ENCODE measurements at regions of chr5 and their contacts with region 1.

Region 1: GRCh38 chr5:1523771-1524480 is at the start of gene LPCAT1:
- DNase-seq: peak; percentile 90 to 95
- ATAC-seq: peak; percentile 92
- H3K4me3 ChIP-seq: peak within 1 kb of the TSS; percentile 97 to 100
- H3K27ac ChIP-seq: peak within 1 kb of the TSS; percentile 7 to 9
- H3K4me1 ChIP-seq: no peaks in the 10 kb centered on the region
- H3K27me3 ChIP-seq: no peaks in the 10 kb centered on the region
- total RNA-seq, gene LPCAT1: 38.7 to 68.7 TPM

Region 2: DNA sequence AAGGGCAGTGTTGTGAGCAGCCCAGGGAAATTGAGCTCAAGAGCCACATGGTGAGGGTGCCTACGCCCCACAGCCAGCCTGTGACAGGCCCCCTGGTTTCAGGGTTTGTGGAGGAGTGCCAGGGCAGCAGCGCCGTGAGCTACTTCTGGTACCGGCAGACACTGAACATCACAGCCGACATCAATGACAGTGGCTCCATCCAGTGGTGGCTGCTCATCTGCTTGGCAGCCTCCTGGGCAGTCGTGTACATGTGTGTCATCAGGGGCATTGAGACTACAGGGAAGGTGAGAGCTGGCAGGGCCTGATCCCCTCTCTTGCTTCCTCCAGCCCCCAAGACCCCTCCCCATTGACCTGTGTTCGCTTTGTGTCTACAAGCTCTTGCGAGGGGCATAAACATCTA is 288.5 kb before region 1 on chr5:
- intact Hi-C with region 1: no loop called
- DNase-seq: no peak
- ATAC-seq: no peak
- H3K4me3 ChIP-seq: no peak overlapping the region
- H3K27ac ChIP-seq: no peak overlapping the region
- H3K4me1 ChIP-seq: no peaks in the 10 kb centered on the region
- H3K27me3 ChIP-seq: no peaks in the 10 kb centered on the region

Region 3: GRCh38 chr5:1594357-1595106 is 70.6 kb after region 1 on chr5:
- intact Hi-C with region 1: loop called in 1 of 2 experiments (anchors 5 kb)
- DNase-seq: peak; percentile 79 to 87
- ATAC-seq: peak; percentile 89
- H3K4me3 ChIP-seq: peak overlapping the region; percentile 44 to 60
- H3K27ac ChIP-seq: peak overlapping the region in 1 of 2 donors; percentile 48
- H3K4me1 ChIP-seq: no peaks in the 10 kb centered on the region
- H3K27me3 ChIP-seq: no peaks in the 10 kb centered on the region

Region 4: GRCh38 chr5:1633605-1634336 is 109.8 kb after region 1 on chr5:
- intact Hi-C with region 1: loop called in 1 of 2 experiments (anchors 2 kb)
- DNase-seq: peak; percentile 93 to 94
- ATAC-seq: peak; percentile 96
- H3K4me3 ChIP-seq: peak overlapping the region; percentile 53 to 57
- H3K27ac ChIP-seq: peak overlapping the region; percentile 28 to 53
- H3K4me1 ChIP-seq: no peaks in the 10 kb centered on the region
- H3K27me3 ChIP-seq: no peaks in the 10 kb centered on the region

Region 5: DNA sequence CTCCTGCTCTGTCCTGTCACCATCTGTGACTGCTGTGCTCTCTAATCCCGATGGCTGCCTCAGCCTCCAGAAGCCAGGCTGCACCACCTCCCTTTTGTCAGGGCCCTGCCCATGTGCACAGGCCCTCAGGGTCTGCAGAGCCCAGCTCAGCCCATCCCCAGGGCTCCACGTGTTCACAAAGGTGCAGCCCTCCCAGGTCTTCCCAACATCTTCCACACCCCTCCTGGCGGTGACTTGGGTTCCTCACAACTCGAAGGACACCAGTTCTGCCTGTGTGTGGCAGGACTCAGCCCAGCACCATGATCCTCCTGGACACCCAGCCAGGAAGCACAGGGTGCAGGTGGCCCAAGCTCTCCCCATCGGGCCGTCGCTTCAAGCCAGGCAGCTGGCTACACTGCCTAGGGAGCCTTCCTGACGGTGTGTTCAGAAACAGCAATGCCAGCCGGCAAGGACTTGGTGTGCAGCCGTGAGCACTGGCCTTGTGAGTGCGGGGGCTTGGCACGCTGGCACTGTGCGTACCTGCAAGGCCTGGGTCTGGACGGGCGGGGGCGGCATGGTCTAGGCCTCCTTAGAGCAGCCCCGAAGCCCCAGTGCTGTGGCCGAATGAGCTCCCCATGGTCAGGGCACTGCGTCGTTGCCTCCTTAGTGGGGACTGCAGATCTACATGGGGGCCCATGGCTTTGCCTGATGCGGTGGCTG is 179.6 kb after region 1 on chr5:
- intact Hi-C with region 1: no loop called
- DNase-seq: no peak
- ATAC-seq: no peak
- H3K4me3 ChIP-seq: no peak overlapping the region
- H3K27ac ChIP-seq: no peak overlapping the region
- H3K4me1 ChIP-seq: no peaks in the 10 kb centered on the region
- H3K27me3 ChIP-seq: peaks cover 0 to 2% of the 10 kb centered on the region in 2 donors